ENCODE measurements at regions of chr19 and their contacts with region 1.

Region 1: GRCh38 chr19:19185853-19186740 is 5.9 kb downstream of the BORCS8 start:
- DNase-seq: peak; percentile 69 to 86 (median 76)
- ATAC-seq: peak; percentile 100
- H3K4me3 ChIP-seq: no peak overlapping the region
- H3K27ac ChIP-seq: peak overlapping the region; percentile 45; the same call in 1 of the 3 replicates
- H3K4me1 ChIP-seq: peaks cover 2 to 15% of the 10 kb centered on the region in 2 experiments; a peak in 3 of 5 replicates
- H3K27me3 ChIP-seq: no peaks in the 10 kb centered on the region
- CTCF ChIP-seq: peak; percentile 84 to 94 (median 88)
- EP300 ChIP-seq: no peak
- POLR2A ChIP-seq: no peak
- RAD21 ChIP-seq: peak in 1 of 2 experiments; percentile 71; a peak in 2 of 4 replicates

Region 2: DNA sequence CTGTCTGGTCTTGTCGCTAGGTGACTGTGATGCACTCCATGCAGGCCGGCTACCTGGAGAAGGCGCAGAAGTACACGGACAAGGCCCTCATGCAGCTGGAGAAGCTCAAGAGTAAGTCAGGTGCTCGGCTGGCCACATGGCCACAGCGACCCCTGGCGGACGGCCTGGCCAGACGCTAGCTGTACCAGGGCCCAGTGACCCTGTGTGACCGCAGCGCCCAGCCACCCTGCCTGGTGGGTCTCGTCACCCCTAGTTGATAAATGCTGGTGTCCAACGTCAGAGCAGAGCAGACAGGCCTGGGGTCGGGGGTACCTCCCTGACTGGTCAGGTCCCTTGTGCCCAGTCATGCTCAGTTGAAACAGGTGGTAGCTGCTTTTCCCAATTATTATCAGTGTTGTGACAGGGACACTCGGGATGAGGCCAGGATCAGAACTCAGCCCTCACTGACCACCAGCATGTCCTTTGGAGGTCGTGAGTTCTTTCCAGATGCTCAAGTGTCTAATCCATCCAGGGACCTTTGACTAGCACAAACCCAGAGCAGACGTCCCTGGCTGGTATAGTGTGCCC is 156.7 kb after region 1 on chr19:
- CTCF ChIA-PET with region 1: no interaction called
- POLR2A ChIA-PET with region 1: no interaction called
- in situ Hi-C with region 1: no loop called
- intact Hi-C with region 1: loop called (anchors 5 kb)
- DNase-seq: peak; percentile 83 to 87 (median 85)
- ATAC-seq: peak; percentile 98
- H3K4me3 ChIP-seq: no peak overlapping the region
- H3K27ac ChIP-seq: no peak overlapping the region
- H3K4me1 ChIP-seq: peaks cover 0 to 29% of the 10 kb centered on the region in 2 experiments; a peak in 1 of 5 replicates
- H3K27me3 ChIP-seq: no peaks in the 10 kb centered on the region
- CTCF ChIP-seq: peak; percentile 88 to 94 (median 92)
- EP300 ChIP-seq: no peak
- POLR2A ChIP-seq: no peak
- RAD21 ChIP-seq: peak; percentile 40 to 77; a peak in 3 of 4 replicates

Region 3: DNA sequence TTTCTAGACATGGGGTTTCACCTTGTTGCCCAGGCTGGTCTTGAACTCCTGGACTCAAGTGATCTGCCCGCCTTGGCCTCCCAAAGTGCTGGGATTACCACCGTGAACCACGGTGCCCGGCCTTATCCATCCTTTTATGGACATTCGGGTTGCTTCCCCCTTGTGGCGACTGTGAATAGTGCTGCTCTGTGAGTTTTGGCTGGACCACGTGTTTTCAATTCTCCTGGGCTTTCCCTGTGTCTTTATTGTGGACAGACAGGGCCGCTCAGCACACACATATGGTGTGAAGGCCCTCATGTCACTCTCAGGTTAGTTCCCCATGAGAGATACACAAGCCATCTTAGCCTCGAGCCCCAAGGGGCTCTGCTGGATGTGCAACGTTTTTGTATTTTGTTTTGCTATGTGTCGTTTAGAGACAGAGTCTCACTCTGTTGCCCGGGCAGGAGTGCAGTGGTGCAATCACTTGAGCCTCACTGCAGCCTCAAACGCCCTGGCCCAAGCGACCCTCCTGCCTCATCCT is 175.0 kb after region 1 on chr19:
- CTCF ChIA-PET with region 1: no interaction called
- POLR2A ChIA-PET with region 1: no interaction called
- in situ Hi-C with region 1: no loop called
- intact Hi-C with region 1: loop called (anchors 5 kb)
- DNase-seq: peak; percentile 71 to 90 (median 78)
- ATAC-seq: peak; percentile 85
- H3K4me3 ChIP-seq: no peak overlapping the region
- H3K27ac ChIP-seq: peak overlapping the region; percentile 16; the same call in 2 of the 3 replicates
- H3K4me1 ChIP-seq: peaks cover 7 to 26% of the 10 kb centered on the region in 2 experiments; a peak in 4 of 5 replicates
- H3K27me3 ChIP-seq: no peaks in the 10 kb centered on the region
- CTCF ChIP-seq: peak; percentile 78 to 84 (median 82)
- EP300 ChIP-seq: no peak
- POLR2A ChIP-seq: no peak; the same call in 1 of the 2 replicates
- RAD21 ChIP-seq: peak; percentile 34 to 60; a peak in 2 of 4 replicates